ENCODE measurements at regions of chr6 and their contacts with region 1.

Region 1: GRCh38 chr6:46340246-46340645 is 151.0 kb downstream of the RCAN2 start:
- DNase-seq: no peak
- H3K4me3 ChIP-seq: no peak overlapping the region
- CTCF ChIP-seq: no peak

Region 2: DNA sequence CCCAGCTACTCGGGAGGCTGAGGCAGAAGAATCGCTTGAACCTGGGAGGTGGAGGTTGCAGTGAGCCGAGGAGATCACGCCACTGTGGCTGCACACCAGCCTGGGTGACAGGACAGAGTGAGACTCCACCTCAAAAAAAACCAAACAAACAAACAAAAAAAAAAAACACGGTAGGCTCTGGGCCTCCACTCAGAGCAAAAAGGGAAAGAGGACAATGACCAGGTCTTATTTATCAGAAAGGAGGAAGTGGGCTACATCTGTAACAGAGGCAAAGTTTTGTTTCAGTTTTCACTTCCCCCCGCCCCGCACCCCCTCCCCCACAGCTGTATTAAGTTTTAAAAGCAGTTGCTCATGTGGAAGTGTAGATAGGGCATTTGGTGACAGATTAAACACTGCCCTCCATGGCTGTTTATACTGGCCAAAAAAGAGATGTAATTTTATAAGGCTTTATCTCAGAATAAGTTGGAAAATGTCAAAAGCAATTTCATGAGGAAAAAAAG is 36.4 kb after region 1 on chr6:
- in situ Hi-C with region 1: loop called (anchors 5 kb)
- DNase-seq: no peak
- H3K4me3 ChIP-seq: no peak overlapping the region
- CTCF ChIP-seq: no peak

Region 3: GRCh38 chr6:46440141-46440540 is 99.9 kb after region 1 on chr6:
- in situ Hi-C with region 1: no loop called
- DNase-seq: peak; percentile 27
- H3K4me3 ChIP-seq: no peak overlapping the region
- CTCF ChIP-seq: no peak